Heart left ventricle (tissue), 16 donors: ENCODE measurements at regions of chr13 and their contacts with region 1.

Region 1: GRCh38 chr13:58324161-58324560 is 692.6 kb downstream of the PCDH17 start:
- DNase-seq: no peak
- ATAC-seq: no peak
- H3K4me3 ChIP-seq: no peak overlapping the region
- H3K27ac ChIP-seq: no peak overlapping the region
- H3K4me1 ChIP-seq: no peaks in the 10 kb centered on the region
- H3K27me3 ChIP-seq: no peaks in the 10 kb centered on the region
- CTCF ChIP-seq: no peak
- POLR2A ChIP-seq: no peak

Region 2: DNA sequence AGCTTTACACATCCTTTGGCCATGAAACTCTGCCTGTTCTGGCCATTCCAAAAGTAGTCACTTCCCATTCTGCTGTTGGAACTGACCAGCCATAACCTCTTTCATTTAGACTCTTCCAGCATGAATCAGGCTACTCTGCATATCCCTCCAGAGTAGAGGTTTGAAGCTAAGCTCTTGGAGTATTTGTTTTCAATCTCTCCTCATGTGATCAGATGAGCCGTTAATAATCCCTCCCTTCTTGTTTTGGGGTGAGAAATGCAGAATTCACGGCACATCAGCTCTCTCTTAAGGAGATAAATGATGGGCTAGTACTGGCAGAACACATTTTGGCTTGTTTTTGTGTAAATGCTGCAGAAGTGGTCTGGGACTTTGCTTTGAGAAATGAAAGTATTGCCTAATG is 172.7 kb before region 1 on chr13:
- intact Hi-C with region 1: no loop called
- DNase-seq: no peak
- ATAC-seq: no peak
- H3K4me3 ChIP-seq: no peak overlapping the region
- H3K27ac ChIP-seq: no peak overlapping the region
- H3K4me1 ChIP-seq: no peaks in the 10 kb centered on the region
- H3K27me3 ChIP-seq: no peaks in the 10 kb centered on the region
- CTCF ChIP-seq: no peak
- POLR2A ChIP-seq: no peak

Region 3: DNA sequence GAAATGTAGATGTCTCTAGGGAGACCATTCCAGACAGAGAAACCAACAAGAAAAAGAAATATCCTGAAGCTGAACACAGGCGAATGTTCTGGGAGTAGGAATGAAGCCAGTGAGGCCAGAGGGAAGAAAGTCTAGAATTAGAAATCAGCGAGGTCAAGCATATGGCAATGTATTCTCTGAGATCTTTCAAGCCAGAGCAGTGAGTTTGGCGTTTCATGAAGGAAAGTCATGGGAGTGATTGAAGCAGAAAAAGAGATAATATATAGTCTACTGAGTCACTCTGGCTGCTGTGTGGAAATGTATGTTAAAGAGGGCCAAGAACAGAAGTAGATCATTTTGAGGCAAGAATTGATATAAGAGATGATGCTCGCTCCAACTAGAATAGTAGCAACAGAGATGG is 116.7 kb before region 1 on chr13:
- intact Hi-C with region 1: no loop called
- DNase-seq: no peak
- ATAC-seq: no peak
- H3K4me3 ChIP-seq: no peak overlapping the region
- H3K27ac ChIP-seq: no peak overlapping the region
- H3K4me1 ChIP-seq: no peaks in the 10 kb centered on the region
- H3K27me3 ChIP-seq: no peaks in the 10 kb centered on the region
- CTCF ChIP-seq: no peak
- POLR2A ChIP-seq: no peak

Region 4: DNA sequence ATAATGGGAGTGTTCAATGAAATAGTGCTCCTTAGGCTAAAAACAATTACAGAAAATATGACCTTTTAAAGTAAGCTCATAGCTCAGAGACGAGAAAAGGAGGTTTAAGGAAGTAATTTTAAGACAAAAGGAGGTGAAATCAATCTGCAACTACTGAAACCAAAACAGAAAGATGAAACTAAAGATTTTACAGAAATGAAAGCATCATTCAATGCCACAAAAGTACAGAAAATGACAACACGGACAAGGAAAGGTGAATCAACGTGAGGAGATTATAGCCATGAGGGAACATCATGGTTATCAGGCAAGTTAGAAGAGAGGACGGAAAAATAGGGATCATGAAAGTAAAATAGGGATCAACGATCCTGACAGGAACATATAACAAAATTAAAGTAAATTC is 52.6 kb after region 1 on chr13:
- intact Hi-C with region 1: loop called in 1 of 10 experiments (anchors 2 kb)
- DNase-seq: no peak
- ATAC-seq: no peak
- H3K4me3 ChIP-seq: no peak overlapping the region
- H3K27ac ChIP-seq: no peak overlapping the region
- H3K4me1 ChIP-seq: no peaks in the 10 kb centered on the region
- H3K27me3 ChIP-seq: no peaks in the 10 kb centered on the region
- CTCF ChIP-seq: no peak
- POLR2A ChIP-seq: no peak